Mammary epithelial cell (primary cell): ENCODE measurements at regions of chr1 and their contacts with region 1.

Region 1: GRCh38 chr1:33086384-33086850 is 5.5 kb downstream of the AZIN2 start:
- DNase-seq: peak; percentile 51
- H3K4me3 ChIP-seq: no peak overlapping the region
- H3K27ac ChIP-seq: no peak overlapping the region
- H3K4me1 ChIP-seq: peaks cover 7% of the 10 kb centered on the region
- H3K27me3 ChIP-seq: no peaks in the 10 kb centered on the region
- CTCF ChIP-seq: peak; percentile 75 to 89

Region 2: GRCh38 chr1:32763221-32763620 is 323.2 kb before region 1 on chr1:
- CTCF ChIA-PET with region 1: no interaction called
- dilution Hi-C with region 1: no loop called
- in situ Hi-C with region 1: no loop called
- intact Hi-C with region 1: no loop called
- DNase-seq: no peak
- H3K4me3 ChIP-seq: no peak overlapping the region
- H3K27ac ChIP-seq: no peak overlapping the region
- H3K4me1 ChIP-seq: peaks cover 76% of the 10 kb centered on the region
- H3K27me3 ChIP-seq: no peaks in the 10 kb centered on the region
- CTCF ChIP-seq: no peak

Region 3: DNA sequence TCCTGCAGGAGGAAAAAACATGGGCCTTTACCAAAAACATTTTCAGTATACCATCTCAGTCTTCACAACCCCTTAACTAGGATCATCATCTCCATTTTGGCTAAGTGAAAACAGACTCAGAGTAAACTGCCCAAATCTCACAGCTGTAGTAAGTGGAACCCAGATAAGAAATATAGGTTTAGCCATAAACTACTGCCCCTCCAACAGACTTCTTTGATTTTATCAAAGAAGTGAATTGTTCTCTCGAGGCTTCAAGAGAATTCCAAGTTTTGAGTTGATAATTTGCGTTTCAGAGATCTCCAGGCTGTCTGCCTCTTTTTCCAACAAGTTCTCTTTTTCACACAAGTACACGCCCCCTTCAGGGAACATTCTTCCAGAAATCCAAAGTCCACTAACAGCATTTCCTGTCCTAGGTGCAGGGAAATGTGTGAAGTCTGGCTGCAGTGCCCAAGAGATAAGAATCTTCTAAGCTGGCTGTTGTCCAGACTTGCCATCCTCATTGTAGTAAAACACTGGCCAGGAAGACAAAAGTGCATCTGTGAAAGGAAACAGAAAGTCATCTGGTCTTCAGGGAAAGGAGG is 152.6 kb before region 1 on chr1:
- CTCF ChIA-PET with region 1: no interaction called
- dilution Hi-C with region 1: no loop called
- in situ Hi-C with region 1: loop called in 1 of 2 experiments (anchors 25 kb)
- intact Hi-C with region 1: loop called (anchors 1 kb)
- DNase-seq: peak; percentile 80
- H3K4me3 ChIP-seq: no peak overlapping the region
- H3K27ac ChIP-seq: peak overlapping the region; percentile 41
- H3K4me1 ChIP-seq: peaks cover 20% of the 10 kb centered on the region
- H3K27me3 ChIP-seq: no peaks in the 10 kb centered on the region
- CTCF ChIP-seq: no peak